CD8-positive, alpha-beta memory T cell (primary cell): ENCODE measurements at regions of chr6 and their contacts with region 1.

Region 1: GRCh38 chr6:160930547-160931377 is 60.8 kb upstream of the MAP3K4 start:
- DNase-seq: peak in 4 of 5 donors; percentile 26 to 44 (median 43)
- H3K4me3 ChIP-seq: no peak overlapping the region
- H3K4me3 Mint-ChIP-seq: peak overlapping the region in 2 of 7 donors; percentile 25 to 74
- H3K27ac ChIP-seq: no peak overlapping the region
- H3K27ac Mint-ChIP-seq: no peak overlapping the region
- H3K4me1 ChIP-seq: no peaks in the 10 kb centered on the region
- H3K4me1 Mint-ChIP-seq: peaks cover 0 to 4% (median 3%) of the 10 kb centered on the region in 3 donors
- H3K27me3 ChIP-seq: peaks cover 3% of the 10 kb centered on the region
- H3K27me3 Mint-ChIP-seq: peaks cover 30 to 55% of the 10 kb centered on the region in 2 donors

Region 2: DNA sequence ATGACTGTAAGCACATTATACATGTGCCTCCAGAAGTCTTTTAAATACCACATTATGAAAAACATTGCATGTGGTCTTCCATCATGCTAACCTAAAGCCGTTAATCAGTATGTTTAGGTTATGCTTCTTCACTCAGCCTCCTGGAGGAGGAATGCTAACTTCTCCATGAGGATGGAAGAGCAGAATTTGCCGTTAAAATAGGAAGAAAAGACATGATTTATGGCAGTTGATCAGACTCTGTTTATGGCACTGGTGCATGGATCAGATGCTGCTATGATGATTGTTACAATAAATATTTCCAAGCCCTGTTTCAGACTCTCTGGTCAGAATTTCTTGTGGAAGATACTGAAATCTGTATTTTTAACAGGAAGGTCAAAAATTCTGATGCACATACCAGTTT is 92.6 kb after region 1 on chr6:
- CTCF ChIA-PET with region 1: no interaction called
- POLR2A ChIA-PET with region 1: no interaction called
- DNase-seq: no peak
- H3K4me3 ChIP-seq: no peak overlapping the region
- H3K4me3 Mint-ChIP-seq: no peak overlapping the region
- H3K27ac ChIP-seq: no peak overlapping the region
- H3K27ac Mint-ChIP-seq: no peak overlapping the region
- H3K4me1 ChIP-seq: peaks cover 5% of the 10 kb centered on the region
- H3K4me1 Mint-ChIP-seq: peaks cover 43 to 74% (median 54%) of the 10 kb centered on the region in 3 donors
- H3K27me3 ChIP-seq: no peaks in the 10 kb centered on the region
- H3K27me3 Mint-ChIP-seq: no peaks in the 10 kb centered on the region

Region 3: GRCh38 chr6:161370880-161371279 is 440.1 kb after region 1 on chr6:
- CTCF ChIA-PET with region 1: interaction called, 151 read pairs
- POLR2A ChIA-PET with region 1: no interaction called
- DNase-seq: peak; percentile 56 to 75 (median 58)
- H3K4me3 ChIP-seq: no peak overlapping the region
- H3K4me3 Mint-ChIP-seq: no peak overlapping the region
- H3K27ac ChIP-seq: no peak overlapping the region
- H3K27ac Mint-ChIP-seq: peak overlapping the region in 1 of 8 donors; percentile 25
- H3K4me1 ChIP-seq: no peaks in the 10 kb centered on the region
- H3K4me1 Mint-ChIP-seq: no peaks in the 10 kb centered on the region
- H3K27me3 ChIP-seq: no peaks in the 10 kb centered on the region
- H3K27me3 Mint-ChIP-seq: no peaks in the 10 kb centered on the region